CD14-positive monocyte (primary cell): ENCODE measurements at regions of chr1 and their contacts with region 1.

Region 1: DNA sequence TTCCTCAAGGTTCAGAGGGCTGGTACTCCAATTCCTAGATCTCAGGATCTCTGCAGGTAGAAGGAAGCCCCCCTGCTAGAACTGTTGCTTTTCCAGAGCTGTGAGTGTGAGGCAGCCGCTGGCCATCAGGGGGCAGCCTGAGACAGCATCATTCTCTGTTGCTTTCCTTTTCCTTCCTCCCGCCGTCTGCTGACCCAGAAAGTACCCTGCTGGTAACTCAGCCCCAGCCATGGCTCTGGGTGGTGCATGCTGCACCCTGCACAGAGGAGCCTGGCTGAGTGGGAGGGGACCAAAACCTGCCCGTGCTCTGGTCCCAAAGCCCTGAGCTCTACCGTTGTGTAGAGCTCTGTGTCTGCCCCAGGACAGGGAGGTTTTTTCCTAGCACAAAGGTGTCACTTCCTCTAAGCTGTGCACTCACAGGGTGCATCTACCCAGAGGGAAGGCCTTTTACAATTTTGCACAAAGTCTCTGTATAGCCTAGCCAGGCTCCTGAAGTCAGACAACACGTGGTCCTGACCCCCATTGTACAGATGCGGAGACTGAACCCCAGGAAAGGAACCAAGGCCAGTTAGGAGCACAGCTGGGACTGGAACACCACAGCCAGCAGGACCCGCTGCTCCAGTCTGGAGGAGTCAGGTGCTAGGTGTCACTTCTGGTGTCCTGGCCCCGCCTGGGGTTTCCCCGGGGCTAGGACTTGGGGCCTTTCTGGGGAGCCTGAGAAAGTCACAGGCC is 5.6 kb upstream of the FAM131C start:
- DNase-seq: peak; percentile 37 to 54 (median 53)
- H3K4me3 ChIP-seq: peak overlapping the region in 1 of 3 experiments; percentile 57
- H3K4me3 Mint-ChIP-seq: peak overlapping the region; percentile 59 to 89
- H3K27ac ChIP-seq: no peak overlapping the region
- H3K27ac Mint-ChIP-seq: peak overlapping the region in 1 of 7 donors; percentile 68
- H3K4me1 ChIP-seq: peaks cover 4% of the 10 kb centered on the region in 2 donors
- H3K4me1 Mint-ChIP-seq: peaks cover 6% of the 10 kb centered on the region
- H3K27me3 ChIP-seq: peaks cover under 1 to 6% of the 10 kb centered on the region in 2 donors
- H3K27me3 Mint-ChIP-seq: peaks cover 9 to 15% (median 15%) of the 10 kb centered on the region in 3 donors
- CTCF ChIP-seq: peak; percentile 92

Region 2: DNA sequence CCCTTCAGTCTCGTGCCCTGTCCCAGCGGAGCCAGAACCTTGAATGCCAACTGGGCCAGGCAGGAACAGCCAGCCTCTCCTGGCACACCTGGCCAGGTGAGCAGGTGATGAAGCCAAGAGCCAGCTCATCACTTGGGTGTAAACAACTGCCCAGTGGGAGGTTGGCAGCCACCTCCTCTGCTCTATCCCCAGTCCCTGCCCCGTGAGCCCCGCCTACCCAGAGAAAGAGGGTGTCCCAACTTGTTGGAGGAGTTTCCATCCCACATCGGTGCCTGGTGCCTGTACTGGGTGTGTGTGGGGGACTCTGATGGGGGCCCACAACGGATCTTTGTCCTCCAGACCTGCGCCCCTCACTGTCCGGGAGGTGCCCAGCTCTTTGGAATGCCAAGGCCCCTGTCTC is 12.2 kb after region 1 on chr1:
- intact Hi-C with region 1: no loop called
- DNase-seq: no peak
- H3K4me3 ChIP-seq: no peak overlapping the region
- H3K4me3 Mint-ChIP-seq: no peak overlapping the region
- H3K27ac ChIP-seq: no peak overlapping the region
- H3K27ac Mint-ChIP-seq: no peak overlapping the region
- H3K4me1 ChIP-seq: no peaks in the 10 kb centered on the region
- H3K4me1 Mint-ChIP-seq: no peaks in the 10 kb centered on the region
- H3K27me3 ChIP-seq: no peaks in the 10 kb centered on the region
- H3K27me3 Mint-ChIP-seq: peaks cover 5 to 12% (median 6%) of the 10 kb centered on the region in 3 donors
- CTCF ChIP-seq: no peak

Region 3: GRCh38 chr1:16167331-16168143 is 88.4 kb after region 1 on chr1:
- intact Hi-C with region 1: no loop called
- DNase-seq: no peak
- H3K4me3 ChIP-seq: no peak overlapping the region
- H3K4me3 Mint-ChIP-seq: peak overlapping the region in 1 of 2 donors; percentile 66
- H3K27ac ChIP-seq: no peak overlapping the region
- H3K27ac Mint-ChIP-seq: no peak overlapping the region
- H3K4me1 ChIP-seq: peaks cover 2 to 5% of the 10 kb centered on the region in 2 donors
- H3K4me1 Mint-ChIP-seq: peaks cover 13% of the 10 kb centered on the region
- H3K27me3 ChIP-seq: peaks cover 6 to 55% of the 10 kb centered on the region in 2 donors
- H3K27me3 Mint-ChIP-seq: peaks cover 51 to 75% (median 65%) of the 10 kb centered on the region in 3 donors
- CTCF ChIP-seq: no peak

Region 4: GRCh38 chr1:16187748-16188401 is 108.8 kb after region 1 on chr1:
- intact Hi-C with region 1: loop called (anchors 1 kb)
- DNase-seq: peak; percentile 44 to 66 (median 57)
- H3K4me3 ChIP-seq: no peak overlapping the region
- H3K4me3 Mint-ChIP-seq: peak overlapping the region in 1 of 2 donors; percentile 11
- H3K27ac ChIP-seq: no peak overlapping the region
- H3K27ac Mint-ChIP-seq: no peak overlapping the region
- H3K4me1 ChIP-seq: no peaks in the 10 kb centered on the region
- H3K4me1 Mint-ChIP-seq: peaks cover 2% of the 10 kb centered on the region
- H3K27me3 ChIP-seq: no peaks in the 10 kb centered on the region
- H3K27me3 Mint-ChIP-seq: peaks cover 2 to 23% (median 10%) of the 10 kb centered on the region in 3 donors
- CTCF ChIP-seq: peak; percentile 91

Region 5: DNA sequence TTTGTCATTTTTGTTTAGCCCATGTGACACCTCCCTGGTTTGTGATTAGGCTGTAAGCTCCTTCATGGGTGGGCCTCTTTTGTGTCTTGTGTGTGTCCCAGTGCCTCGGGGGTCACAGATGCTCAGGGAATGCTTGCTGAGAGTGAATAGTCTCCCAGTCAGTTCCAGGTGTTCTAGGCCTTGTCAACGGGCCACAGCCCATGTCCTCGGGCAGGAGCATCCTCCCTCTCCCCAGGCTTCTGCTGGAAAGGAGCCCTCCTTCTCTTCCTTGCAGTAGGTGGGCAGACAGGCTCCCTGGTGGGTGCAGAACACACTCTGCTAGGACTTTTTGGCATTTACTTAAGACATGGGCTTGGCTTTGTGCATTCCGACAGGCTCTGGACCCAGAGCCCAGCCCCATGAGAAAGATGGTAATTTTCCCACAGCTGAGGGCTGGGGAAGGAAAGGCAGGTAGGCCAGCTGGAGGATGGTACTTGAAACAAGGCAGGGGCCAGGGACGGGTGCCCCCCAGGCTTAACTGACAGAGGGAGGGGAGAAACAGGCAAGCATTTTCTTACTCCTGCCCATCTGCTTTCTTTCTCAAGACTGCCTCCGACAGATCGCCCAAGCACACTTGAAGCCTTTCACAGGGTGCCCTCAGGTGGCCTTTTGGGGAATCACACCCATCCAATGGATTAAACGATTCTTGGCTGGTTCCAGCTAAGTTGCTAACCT is 165.0 kb after region 1 on chr1:
- intact Hi-C with region 1: loop called (anchors 5 to 10 kb)
- DNase-seq: peak; percentile 35 to 67 (median 55)
- H3K4me3 ChIP-seq: no peak overlapping the region
- H3K4me3 Mint-ChIP-seq: no peak overlapping the region
- H3K27ac ChIP-seq: no peak overlapping the region
- H3K27ac Mint-ChIP-seq: no peak overlapping the region
- H3K4me1 ChIP-seq: peaks cover 6 to 8% of the 10 kb centered on the region in 2 donors
- H3K4me1 Mint-ChIP-seq: peaks cover 13% of the 10 kb centered on the region
- H3K27me3 ChIP-seq: no peaks in the 10 kb centered on the region
- H3K27me3 Mint-ChIP-seq: peaks cover 0 to 2% (median 0%) of the 10 kb centered on the region in 3 donors
- CTCF ChIP-seq: peak; percentile 87